Body of pancreas (tissue), 4 donors: ENCODE measurements at regions of chr19 and their contacts with region 1.

Region 1: GRCh38 chr19:14689598-14690503 is at the start of gene ZNF333:
- DNase-seq: peak; percentile 95 to 98 (median 96)
- ATAC-seq: peak; percentile 96
- H3K4me3 ChIP-seq: peak within 1 kb of the TSS; percentile 35 to 78
- H3K27ac ChIP-seq: peak within 1 kb of the TSS; percentile 88 to 97 (median 92)
- H3K4me1 ChIP-seq: peaks cover 15% of the 10 kb centered on the region
- H3K27me3 ChIP-seq: no peaks in the 10 kb centered on the region
- CTCF ChIP-seq: peak in 2 of 7 experiments; percentile 9 to 26
- POLR2A ChIP-seq: peak; percentile 36 to 67 (median 63)
- total RNA-seq, gene ZNF333: 14.2 to 18.2 TPM

Region 2: GRCh38 chr19:14563989-14564651 is 125.7 kb before region 1 on chr19:
- intact Hi-C with region 1: loop called (anchors 10 kb)
- DNase-seq: peak in 1 of 4 donors; percentile 21
- ATAC-seq: no peak
- H3K4me3 ChIP-seq: no peak overlapping the region
- H3K27ac ChIP-seq: no peak overlapping the region
- H3K4me1 ChIP-seq: peaks cover 14% of the 10 kb centered on the region
- H3K27me3 ChIP-seq: no peaks in the 10 kb centered on the region
- CTCF ChIP-seq: no peak
- POLR2A ChIP-seq: no peak

Region 3: DNA sequence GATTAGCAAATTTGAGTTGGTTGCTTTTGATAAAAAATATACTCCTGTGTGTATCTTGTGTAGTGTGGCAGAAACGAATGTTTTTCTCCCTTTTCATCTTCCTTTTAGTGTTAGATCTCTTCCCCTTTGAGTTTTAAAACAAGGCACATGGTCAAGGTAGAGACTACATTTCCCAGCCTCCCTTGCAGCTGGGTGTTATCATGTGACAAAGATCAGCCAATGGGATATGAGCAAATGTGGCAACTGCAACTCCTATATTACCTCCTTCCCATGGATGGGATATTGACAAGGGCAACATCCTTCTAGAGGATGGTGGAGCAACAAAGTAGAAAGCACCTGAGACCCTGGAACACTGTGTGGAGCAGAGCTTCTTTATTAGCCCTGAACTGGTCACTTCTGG is 57.6 kb before region 1 on chr19:
- intact Hi-C with region 1: no loop called
- DNase-seq: no peak
- ATAC-seq: no peak
- H3K4me3 ChIP-seq: no peak overlapping the region
- H3K27ac ChIP-seq: no peak overlapping the region
- H3K4me1 ChIP-seq: no peaks in the 10 kb centered on the region
- H3K27me3 ChIP-seq: no peaks in the 10 kb centered on the region
- CTCF ChIP-seq: no peak
- POLR2A ChIP-seq: no peak

Region 4: GRCh38 chr19:14731200-14731599 is 41.3 kb after region 1 on chr19:
- intact Hi-C with region 1: no loop called
- DNase-seq: no peak
- ATAC-seq: no peak
- H3K4me3 ChIP-seq: no peak overlapping the region
- H3K27ac ChIP-seq: no peak overlapping the region
- H3K4me1 ChIP-seq: no peaks in the 10 kb centered on the region
- H3K27me3 ChIP-seq: no peaks in the 10 kb centered on the region
- CTCF ChIP-seq: no peak
- POLR2A ChIP-seq: no peak